ENCODE measurements at regions of chr3 and their contacts with region 1.

Region 1: GRCh38 chr3:124467980-124468902 is 262.0 kb upstream of the UMPS start:
- DNase-seq: peak; percentile 39 to 64 (median 54)
- ATAC-seq: peak; percentile 97
- H3K4me3 ChIP-seq: no peak overlapping the region
- H3K27ac ChIP-seq: no peak overlapping the region
- H3K4me1 ChIP-seq: no peaks in the 10 kb centered on the region
- H3K27me3 ChIP-seq: no peaks in the 10 kb centered on the region
- CTCF ChIP-seq: peak; percentile 83 to 93

Region 2: GRCh38 chr3:124351430-124352148 is 116.7 kb before region 1 on chr3:
- intact Hi-C with region 1: loop called in 1 of 2 experiments (anchors 10 kb)
- DNase-seq: peak in 2 of 4 donors; percentile 52 to 76
- ATAC-seq: peak; percentile 98
- H3K4me3 ChIP-seq: no peak overlapping the region
- H3K27ac ChIP-seq: no peak overlapping the region
- H3K4me1 ChIP-seq: peaks cover 0 to 8% of the 10 kb centered on the region in 2 donors
- H3K27me3 ChIP-seq: no peaks in the 10 kb centered on the region
- CTCF ChIP-seq: peak in 1 of 2 donors; percentile 35